ENCODE measurements at regions of chr4 and their contacts with region 1.

Region 1: GRCh38 chr4:101183666-101184373 is 163.5 kb downstream of the PPP3CA start:
- DNase-seq: no peak
- ATAC-seq: no peak
- H3K4me3 Mint-ChIP-seq: no peak overlapping the region
- H3K27ac Mint-ChIP-seq: no peak overlapping the region
- H3K4me1 Mint-ChIP-seq: peaks cover 53% of the 10 kb centered on the region
- H3K27me3 Mint-ChIP-seq: no peaks in the 10 kb centered on the region
- CTCF ChIP-seq: no peak

Region 2: GRCh38 chr4:101199507-101200285 is 15.9 kb after region 1 on chr4:
- CTCF ChIA-PET with region 1: interaction called, 3 read pairs
- POLR2A ChIA-PET with region 1: interaction called, 3 read pairs
- intact Hi-C with region 1: loop called (anchors 2 kb)
- DNase-seq: no peak
- ATAC-seq: no peak
- H3K4me3 Mint-ChIP-seq: no peak overlapping the region
- H3K27ac Mint-ChIP-seq: peak overlapping the region; percentile 30
- H3K4me1 Mint-ChIP-seq: peaks cover 60% of the 10 kb centered on the region
- H3K27me3 Mint-ChIP-seq: no peaks in the 10 kb centered on the region
- CTCF ChIP-seq: no peak